ENCODE measurements at regions of chr15 and their contacts with region 1.

Region 1: DNA sequence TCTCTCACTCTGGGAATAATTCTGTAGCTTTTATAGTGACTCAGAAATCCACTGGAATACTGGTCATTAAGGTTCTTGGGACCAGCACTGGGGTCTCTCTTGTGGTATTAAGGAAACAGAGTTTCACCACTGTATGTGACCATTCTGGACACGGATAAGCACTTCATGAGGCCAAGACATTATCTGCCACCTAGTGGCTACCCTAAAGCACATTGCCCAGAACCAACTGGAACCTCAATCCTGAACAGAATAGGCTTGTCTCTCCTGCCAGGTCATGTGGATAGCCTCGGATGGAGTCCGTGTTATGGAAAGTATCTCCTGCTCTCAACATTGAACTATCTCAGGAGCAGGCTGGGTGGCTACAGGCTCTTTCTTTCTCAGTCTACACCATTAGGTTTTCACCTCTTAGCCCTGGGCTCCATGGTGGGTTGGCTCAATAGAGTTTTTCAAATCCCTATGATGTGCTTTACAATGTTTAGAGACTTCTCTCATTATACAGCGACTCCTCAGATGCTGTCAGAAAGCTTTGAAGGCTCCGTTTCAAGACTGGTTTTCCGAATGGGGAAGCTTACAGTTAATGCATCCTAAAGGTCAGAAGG is 167.6 kb upstream of the ST8SIA2 start:
- H3K4me3 Mint-ChIP-seq: no peak overlapping the region
- H3K27ac Mint-ChIP-seq: no peak overlapping the region
- H3K4me1 Mint-ChIP-seq: no peaks in the 10 kb centered on the region
- H3K27me3 Mint-ChIP-seq: no peaks in the 10 kb centered on the region

Region 2: GRCh38 chr15:91302588-91303439 is 923.3 kb before region 1 on chr15:
- intact Hi-C with region 1: loop called (anchors 10 kb)
- H3K4me3 Mint-ChIP-seq: no peak overlapping the region
- H3K27ac Mint-ChIP-seq: no peak overlapping the region
- H3K4me1 Mint-ChIP-seq: peaks cover 9% of the 10 kb centered on the region
- H3K27me3 Mint-ChIP-seq: peaks cover 17% of the 10 kb centered on the region

Region 3: DNA sequence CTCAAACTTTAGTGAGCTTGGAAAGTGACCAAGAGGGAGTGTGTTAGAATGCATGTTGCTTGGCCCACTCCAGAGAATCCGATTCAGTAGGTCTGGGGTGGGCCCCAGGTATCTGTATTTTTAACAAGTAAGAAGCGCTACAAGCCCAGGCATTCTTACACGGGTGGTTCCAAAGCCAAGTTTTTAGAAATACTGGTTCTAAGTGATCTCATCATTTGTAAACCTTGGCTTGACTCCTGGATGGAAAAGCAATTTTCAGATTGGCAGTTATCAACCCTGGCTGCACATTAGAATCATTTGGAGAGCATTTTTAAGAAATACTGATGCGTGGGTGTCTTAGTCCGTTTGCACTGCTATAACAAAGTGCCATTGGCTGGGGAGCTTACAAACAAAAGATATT is 140.3 kb after region 1 on chr15:
- intact Hi-C with region 1: no loop called
- H3K4me3 Mint-ChIP-seq: no peak overlapping the region
- H3K27ac Mint-ChIP-seq: no peak overlapping the region
- H3K4me1 Mint-ChIP-seq: no peaks in the 10 kb centered on the region
- H3K27me3 Mint-ChIP-seq: no peaks in the 10 kb centered on the region